ENCODE measurements at regions of chr19 and their contacts with region 1.

Region 1: GRCh38 chr19:34461375-34462100 is 20.0 kb upstream of the WTIP start:
- DNase-seq: peak; percentile 52
- H3K4me3 ChIP-seq: no peak overlapping the region
- CTCF ChIP-seq: no peak

Region 2: GRCh38 chr19:34471906-34472700 is 10.6 kb after region 1 on chr19:
- CTCF ChIA-PET with region 1: interaction called, 17 read pairs
- POLR2A ChIA-PET with region 1: no interaction called
- DNase-seq: no peak
- H3K4me3 ChIP-seq: no peak overlapping the region
- CTCF ChIP-seq: no peak